Activated naive CD4-positive, alpha-beta T cell treated with anti-CD3 and anti-CD28 coated beads for 36 hours (primary cell): ENCODE measurements at regions of chr9 and their contacts with region 1.

Region 1: GRCh38 chr9:1939926-1940368 is 75.2 kb upstream of the SMARCA2 start:
- DNase-seq: peak; percentile 64
- H3K4me3 Mint-ChIP-seq: no peak overlapping the region
- H3K27ac Mint-ChIP-seq: no peak overlapping the region
- H3K4me1 Mint-ChIP-seq: peaks cover 4% of the 10 kb centered on the region
- H3K27me3 Mint-ChIP-seq: peaks cover 8% of the 10 kb centered on the region

Region 2: DNA sequence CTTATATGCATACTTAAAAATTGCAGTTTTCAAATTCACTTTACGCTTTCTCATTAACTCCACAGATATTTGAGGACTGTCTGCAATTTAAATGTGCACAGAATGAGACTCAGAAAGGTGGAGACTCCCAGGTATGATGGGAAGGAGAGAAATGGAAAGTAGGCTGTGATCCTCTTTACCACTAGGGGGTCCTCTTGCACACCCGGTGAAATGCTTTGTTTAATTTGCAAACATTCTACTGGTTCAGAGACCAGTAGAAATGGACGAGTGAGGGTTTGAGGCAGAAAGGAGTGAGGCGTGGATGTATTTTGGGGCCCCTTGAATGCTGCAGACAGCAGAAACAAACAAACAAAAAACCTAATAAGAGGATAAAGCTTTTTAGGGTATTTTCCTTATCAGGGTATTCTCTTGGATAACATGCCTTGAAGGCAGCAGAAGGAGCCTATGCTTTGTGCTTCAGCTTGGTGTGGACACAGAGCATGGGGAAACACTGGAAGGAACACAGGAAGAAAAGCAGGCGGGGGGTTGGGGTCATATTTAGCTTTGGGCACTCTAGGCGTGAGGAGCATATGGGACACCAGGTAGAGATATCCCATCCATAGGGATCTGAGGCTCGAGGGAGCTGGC is 479.7 kb before region 1 on chr9:
- CTCF ChIA-PET with region 1: interaction called, 4 read pairs
- intact Hi-C with region 1: loop called (anchors 1 kb)
- DNase-seq: peak; percentile 27
- H3K4me3 Mint-ChIP-seq: no peak overlapping the region
- H3K27ac Mint-ChIP-seq: no peak overlapping the region
- H3K4me1 Mint-ChIP-seq: no peaks in the 10 kb centered on the region
- H3K27me3 Mint-ChIP-seq: peaks cover 9% of the 10 kb centered on the region

Region 3: DNA sequence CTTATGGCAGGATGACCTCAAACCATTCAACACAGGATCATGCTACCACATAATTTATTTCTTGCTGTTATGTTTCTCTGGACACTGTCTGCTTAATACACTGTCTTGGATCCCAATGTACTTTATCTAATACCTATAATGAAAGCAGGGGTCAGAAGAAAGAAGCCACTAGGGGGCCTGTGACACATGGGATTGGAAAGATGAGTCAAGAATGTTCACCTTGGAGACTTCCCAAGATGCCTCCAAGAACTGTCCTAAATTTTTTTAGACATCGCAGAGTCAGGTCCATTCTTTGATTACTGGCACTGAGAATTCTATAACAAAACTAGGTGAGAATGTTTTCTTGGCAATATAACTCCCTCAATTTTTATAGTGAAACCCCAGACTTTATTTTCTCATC is 230.6 kb before region 1 on chr9:
- CTCF ChIA-PET with region 1: interaction called, 3 read pairs
- intact Hi-C with region 1: loop called (anchors 1 kb)
- DNase-seq: peak; percentile 27
- H3K4me3 Mint-ChIP-seq: no peak overlapping the region
- H3K27ac Mint-ChIP-seq: no peak overlapping the region
- H3K4me1 Mint-ChIP-seq: no peaks in the 10 kb centered on the region
- H3K27me3 Mint-ChIP-seq: peaks cover 26% of the 10 kb centered on the region

Region 4: GRCh38 chr9:1726993-1727759 is 212.8 kb before region 1 on chr9:
- CTCF ChIA-PET with region 1: interaction called, 10 read pairs
- intact Hi-C with region 1: loop called (anchors 1 kb)
- DNase-seq: peak; percentile 16
- H3K4me3 Mint-ChIP-seq: no peak overlapping the region
- H3K27ac Mint-ChIP-seq: no peak overlapping the region
- H3K4me1 Mint-ChIP-seq: no peaks in the 10 kb centered on the region
- H3K27me3 Mint-ChIP-seq: peaks cover 5% of the 10 kb centered on the region

Region 5: DNA sequence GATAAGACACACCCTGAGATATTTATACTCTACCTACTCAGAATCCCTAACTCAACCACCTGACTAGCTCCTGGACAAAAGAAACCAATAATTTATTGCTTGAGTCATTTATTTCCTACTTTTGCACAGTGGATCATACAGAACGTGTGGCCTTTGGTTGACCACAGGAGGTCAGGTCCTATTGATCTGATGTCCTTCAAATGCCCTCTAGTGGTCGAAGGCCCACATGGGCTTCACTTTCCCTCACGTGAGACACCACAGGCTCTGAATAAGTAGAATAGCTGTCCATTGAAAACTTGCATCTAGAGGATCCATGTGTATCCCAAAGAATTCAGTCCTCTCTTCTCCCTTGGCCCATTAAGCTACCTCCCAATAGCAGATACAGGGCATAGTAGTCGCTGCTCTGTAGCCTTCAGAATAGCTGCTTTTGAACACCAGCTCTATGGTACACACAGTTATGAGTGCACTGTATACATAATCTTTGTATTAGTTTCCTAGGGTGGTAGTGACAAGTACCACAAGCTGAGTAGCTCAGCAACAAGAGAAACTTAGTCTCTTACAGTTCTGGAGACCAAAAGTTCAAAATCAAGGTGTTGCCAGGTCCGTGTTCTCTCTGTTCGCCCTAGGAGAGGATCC is 102.4 kb before region 1 on chr9:
- CTCF ChIA-PET with region 1: interaction called, 13 read pairs
- intact Hi-C with region 1: no loop called
- DNase-seq: peak; percentile 37
- H3K4me3 Mint-ChIP-seq: no peak overlapping the region
- H3K27ac Mint-ChIP-seq: no peak overlapping the region
- H3K4me1 Mint-ChIP-seq: no peaks in the 10 kb centered on the region
- H3K27me3 Mint-ChIP-seq: peaks cover 6% of the 10 kb centered on the region

Region 6: GRCh38 chr9:2066312-2067273 is 126.6 kb after region 1 on chr9:
- CTCF ChIA-PET with region 1: interaction called, 7 read pairs
- intact Hi-C with region 1: loop called (anchors 2 kb)
- DNase-seq: no peak
- H3K4me3 Mint-ChIP-seq: no peak overlapping the region
- H3K27ac Mint-ChIP-seq: no peak overlapping the region
- H3K4me1 Mint-ChIP-seq: peaks cover 13% of the 10 kb centered on the region
- H3K27me3 Mint-ChIP-seq: no peaks in the 10 kb centered on the region